SK-N-SH (cell line): ENCODE measurements at regions of chr11 and their contacts with region 1.

Region 1: DNA sequence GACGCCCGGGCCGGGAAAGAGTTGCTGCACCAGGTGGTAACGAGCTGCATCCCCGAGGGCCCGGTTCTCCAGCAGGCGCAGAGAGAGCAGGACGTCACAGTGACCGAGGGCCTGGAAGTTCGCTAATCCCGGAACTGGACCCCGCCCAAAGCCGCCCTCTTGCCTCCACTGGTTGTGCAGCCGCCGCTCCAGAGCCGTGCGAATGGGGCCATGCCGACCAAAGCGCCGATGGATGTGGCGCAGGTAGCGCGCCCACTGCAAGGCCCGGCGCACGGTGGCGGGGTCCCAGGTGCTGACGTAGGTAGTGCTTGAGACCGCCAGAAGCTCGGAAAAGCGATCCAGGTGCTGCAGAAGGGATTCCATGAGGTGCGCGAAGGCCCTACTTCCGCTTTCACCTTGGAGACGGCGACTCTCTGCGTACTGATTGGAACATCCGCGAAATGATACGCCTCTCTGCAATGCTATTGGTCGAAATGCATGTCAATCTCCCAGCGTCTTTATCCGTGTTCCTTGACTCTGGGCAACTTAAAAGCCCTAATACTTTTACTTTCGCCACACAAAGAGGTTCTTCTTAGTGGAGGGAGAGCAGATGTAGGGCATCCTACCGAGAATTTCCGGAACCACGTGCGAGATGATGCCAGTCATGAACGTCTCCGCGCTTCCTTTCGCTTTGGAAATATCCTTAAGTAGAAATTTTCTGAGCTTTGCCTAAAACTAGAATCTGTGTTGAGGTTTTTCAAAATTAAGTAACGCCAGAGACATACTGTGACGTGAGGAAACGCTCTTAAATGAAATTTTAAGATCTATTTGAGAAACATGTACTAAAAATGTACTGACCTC is at the start of gene FANCF:
- DNase-seq: peak; percentile 88
- H3K4me3 ChIP-seq: peak within 1 kb of the TSS; percentile 90 to 94
- H3K27ac ChIP-seq: peak within 1 kb of the TSS; percentile 76 to 96
- H3K4me1 ChIP-seq: peaks cover 8 to 11% of the 10 kb centered on the region in 2 experiments; a peak in 3 of 4 replicates
- H3K27me3 ChIP-seq: no peaks in the 10 kb centered on the region
- CTCF ChIP-seq: no peak
- EP300 ChIP-seq: no peak
- RAD21 ChIP-seq: no peak
- polyA plus RNA-seq, gene FANCF: 4.3 and 4.9 TPM in 2 replicates

Region 2: GRCh38 chr11:22666688-22667439 is 41.2 kb after region 1 on chr11:
- CTCF ChIA-PET with region 1: interaction called, 11 read pairs
- POLR2A ChIA-PET with region 1: interaction called, 6 read pairs
- DNase-seq: peak; percentile 85
- H3K4me3 ChIP-seq: peak overlapping the region; percentile 52 to 53; a peak in 3 of 4 replicates
- H3K27ac ChIP-seq: peak overlapping the region in 1 of 2 experiments; percentile 28; a peak in 1 of 4 replicates
- H3K4me1 ChIP-seq: peaks cover 0 to 8% of the 10 kb centered on the region in 2 experiments; a peak in 1 of 4 replicates
- H3K27me3 ChIP-seq: peaks cover 17% of the 10 kb centered on the region; the same call in 1 of the 2 replicates
- CTCF ChIP-seq: peak; percentile 11; the same call in 1 of the 2 replicates
- EP300 ChIP-seq: no peak
- RAD21 ChIP-seq: no peak